ENCODE measurements at regions of chr14 and their contacts with region 1.

Region 1: DNA sequence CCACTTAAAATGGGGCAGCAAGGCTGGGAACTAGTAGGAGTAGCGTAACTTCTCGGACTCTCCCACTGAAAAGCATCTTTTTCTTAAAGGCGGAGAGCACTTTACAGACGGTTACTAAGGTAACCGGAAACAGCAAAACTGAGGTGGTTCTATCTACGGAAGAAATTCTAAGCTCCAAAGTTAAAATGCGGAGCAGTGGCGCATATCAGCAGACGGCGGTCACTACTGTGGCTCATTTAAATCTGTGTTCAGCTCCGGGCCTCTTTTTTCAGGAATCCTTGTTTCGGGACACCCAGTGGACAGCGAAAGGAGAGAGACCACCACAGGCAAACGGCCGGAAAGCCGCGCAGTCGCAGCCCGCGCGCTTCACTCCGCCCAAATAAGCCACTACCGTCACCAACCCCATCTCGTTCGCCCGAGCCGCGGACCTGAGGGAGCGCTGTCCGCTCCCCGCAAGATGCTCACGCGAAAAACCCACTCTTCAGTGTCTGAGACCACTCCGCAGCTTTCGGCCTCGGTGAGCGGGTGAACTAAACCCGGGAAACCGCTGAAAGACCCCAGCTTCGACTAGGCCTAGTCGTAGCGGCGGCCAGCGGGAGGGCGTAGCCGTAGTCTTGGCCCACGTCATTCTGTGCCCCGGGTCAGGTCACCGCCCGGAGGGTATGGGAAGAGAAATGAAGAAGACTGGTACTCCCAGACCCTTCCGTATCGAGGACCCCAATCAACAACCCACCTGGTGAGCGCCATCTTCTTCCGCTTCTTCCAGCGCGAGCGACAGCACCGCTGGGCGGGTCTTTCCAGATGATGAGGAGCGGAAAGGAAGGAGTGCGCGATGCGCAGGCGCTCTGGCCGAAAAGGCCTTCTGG is at the start of gene SNW1:
- DNase-seq: peak; percentile 95
- ATAC-seq: peak; percentile 98
- total RNA-seq, gene SNW1: 52.6 TPM

Region 2: DNA sequence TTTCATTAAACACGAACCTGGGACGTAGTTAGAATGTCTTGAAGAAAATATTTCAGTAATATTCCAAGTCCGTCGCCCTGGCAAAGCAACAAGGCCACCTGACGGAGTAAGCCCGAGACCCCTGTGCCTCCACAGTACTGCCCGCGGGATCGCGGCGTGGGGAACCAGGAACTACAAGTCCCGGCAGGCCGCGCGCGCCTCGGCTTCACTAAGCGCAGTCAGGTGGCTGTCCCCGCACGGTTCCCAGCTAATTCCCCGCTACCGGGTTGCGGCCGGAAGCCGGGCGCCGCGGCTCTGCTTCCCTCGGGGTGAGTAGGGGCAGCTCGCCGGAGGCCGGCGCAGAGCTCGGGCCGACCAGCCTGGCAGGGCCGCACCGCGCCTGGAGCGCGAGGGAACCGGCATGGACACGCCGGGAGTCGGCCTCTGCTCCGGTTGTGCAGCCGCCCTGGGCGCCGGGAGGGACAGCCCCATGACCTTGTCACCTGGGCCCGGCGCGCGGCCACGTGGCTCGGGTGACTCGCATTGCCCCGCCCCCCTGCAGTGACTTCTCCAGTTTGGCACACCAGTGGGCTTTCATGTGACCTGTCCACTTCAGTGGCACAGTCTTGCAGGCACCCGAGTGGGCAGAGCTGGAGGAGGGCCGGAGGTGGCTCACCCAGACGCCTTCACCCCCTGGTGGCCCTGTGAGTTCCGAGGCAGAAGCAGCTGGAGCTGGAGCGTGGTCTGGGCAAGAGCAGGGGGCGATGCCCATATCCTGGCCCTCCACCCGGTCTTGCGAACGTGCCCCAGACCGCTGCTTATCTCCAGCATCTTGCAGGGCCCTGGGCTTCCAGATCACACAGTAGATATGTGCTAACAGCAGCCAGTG is 39.5 kb after region 1 on chr14 and contains the start of gene ADCK1:
- intact Hi-C with region 1: loop called (anchors 5 kb)
- DNase-seq: peak; percentile 96
- ATAC-seq: peak; percentile 98
- total RNA-seq, gene ADCK1: 8.9 TPM

Measured in Right ventricle myocardium superior (tissue), 1 donor.